OCI-LY7 (cell line): ENCODE measurements at regions of chr5 and their contacts with region 1.

Region 1: DNA sequence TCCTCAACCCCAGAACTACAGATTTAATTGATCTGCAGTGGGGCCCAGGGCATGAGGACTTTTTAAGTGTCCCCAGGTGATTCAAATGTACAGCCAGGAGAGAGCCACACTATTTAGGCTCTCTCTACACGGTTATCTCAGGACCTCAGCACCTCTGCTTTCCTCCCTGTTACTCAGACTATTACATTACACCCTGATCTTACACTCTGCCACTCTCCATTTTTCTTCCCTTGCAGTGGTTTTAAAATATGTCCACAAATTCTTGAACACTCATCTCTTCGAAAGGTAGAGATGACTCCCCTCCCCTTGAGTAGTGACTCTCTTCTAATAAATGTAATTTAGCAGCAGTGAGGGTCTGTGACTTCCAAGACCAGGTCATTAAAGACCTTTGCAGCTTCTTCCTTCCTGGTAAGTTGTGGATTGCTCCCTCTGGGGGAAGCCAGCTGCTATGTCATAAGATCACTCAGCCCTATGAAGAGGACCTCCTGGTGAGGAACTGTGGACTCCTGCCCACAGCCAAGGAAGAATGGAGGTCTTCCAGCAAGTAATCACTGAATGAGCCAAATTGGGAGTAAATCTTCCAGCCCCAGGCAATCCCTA is 87.5 kb upstream of the SSBP2 start:
- DNase-seq: peak; percentile 68
- H3K4me3 ChIP-seq: no peak overlapping the region
- H3K27ac ChIP-seq: no peak overlapping the region
- H3K4me1 ChIP-seq: peaks cover 5% of the 10 kb centered on the region
- CTCF ChIP-seq: peak; percentile 81

Region 2: GRCh38 chr5:81425569-81425968 is 412.8 kb before region 1 on chr5:
- CTCF ChIA-PET with region 1: no interaction called
- POLR2A ChIA-PET with region 1: no interaction called
- intact Hi-C with region 1: loop called (anchors 5 kb)
- DNase-seq: peak; percentile 75
- H3K4me3 ChIP-seq: no peak overlapping the region
- H3K27ac ChIP-seq: peak overlapping the region; percentile 24
- H3K4me1 ChIP-seq: peaks cover 13% of the 10 kb centered on the region
- CTCF ChIP-seq: peak; percentile 91

Region 3: DNA sequence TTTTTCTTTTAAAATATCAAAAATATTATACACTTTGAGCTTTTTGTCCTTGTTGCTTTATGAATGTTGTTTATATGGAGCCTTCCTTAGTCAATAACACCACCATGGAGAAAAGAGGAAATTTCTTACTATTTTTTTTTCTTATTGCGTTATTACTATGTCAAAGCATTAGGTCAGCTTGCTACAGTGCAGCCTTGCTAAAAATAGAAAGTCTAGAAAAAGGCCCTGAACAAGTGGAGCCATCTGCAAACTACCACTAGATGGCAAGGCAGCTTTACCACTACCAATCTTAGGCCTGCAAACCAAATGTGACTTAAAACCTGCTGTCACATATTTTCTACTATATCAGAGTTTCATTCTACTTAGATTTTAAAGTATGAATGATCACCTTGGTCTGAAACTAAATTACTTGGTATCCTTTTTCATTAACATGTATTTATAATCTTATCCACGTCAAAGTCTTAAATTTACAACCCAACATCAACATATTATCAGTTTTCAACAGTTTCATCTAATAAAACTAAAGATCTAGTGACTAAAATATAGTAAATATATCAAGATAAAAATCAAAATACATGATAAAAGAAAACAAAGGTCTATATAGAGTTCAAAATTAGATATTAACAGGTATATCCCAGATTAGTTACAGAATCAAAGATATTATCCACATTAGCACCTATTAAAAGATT is 331.4 kb before region 1 on chr5:
- CTCF ChIA-PET with region 1: no interaction called
- POLR2A ChIA-PET with region 1: interaction called, 3 read pairs
- intact Hi-C with region 1: loop called (anchors 5 kb)
- DNase-seq: peak; percentile 92
- H3K4me3 ChIP-seq: no peak overlapping the region
- H3K27ac ChIP-seq: peak overlapping the region; percentile 40
- H3K4me1 ChIP-seq: peaks cover 37% of the 10 kb centered on the region
- CTCF ChIP-seq: peak; percentile 96

Region 4: DNA sequence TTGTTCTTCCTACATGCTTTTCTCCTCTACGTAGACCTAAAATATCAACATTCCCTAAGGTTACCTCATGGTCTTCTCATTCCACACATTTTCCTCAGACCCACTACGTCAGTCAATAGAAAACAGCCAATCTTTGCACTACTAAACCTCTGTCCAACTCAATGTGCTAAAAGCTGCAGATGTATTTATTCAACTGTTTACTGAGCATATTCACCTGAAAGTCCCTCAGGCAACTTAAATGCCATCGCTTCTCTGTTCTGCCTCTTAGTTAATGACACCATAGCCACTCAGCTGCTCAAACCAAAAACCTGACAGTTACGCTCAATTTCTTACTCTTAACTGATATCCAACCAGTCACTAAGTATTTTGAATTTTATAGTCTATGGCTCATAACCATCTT is 162.6 kb before region 1 on chr5:
- CTCF ChIA-PET with region 1: no interaction called
- POLR2A ChIA-PET with region 1: no interaction called
- intact Hi-C with region 1: no loop called
- DNase-seq: no peak
- H3K4me3 ChIP-seq: no peak overlapping the region
- H3K27ac ChIP-seq: no peak overlapping the region
- H3K4me1 ChIP-seq: peaks cover under 1% of the 10 kb centered on the region
- CTCF ChIP-seq: no peak

Region 5: DNA sequence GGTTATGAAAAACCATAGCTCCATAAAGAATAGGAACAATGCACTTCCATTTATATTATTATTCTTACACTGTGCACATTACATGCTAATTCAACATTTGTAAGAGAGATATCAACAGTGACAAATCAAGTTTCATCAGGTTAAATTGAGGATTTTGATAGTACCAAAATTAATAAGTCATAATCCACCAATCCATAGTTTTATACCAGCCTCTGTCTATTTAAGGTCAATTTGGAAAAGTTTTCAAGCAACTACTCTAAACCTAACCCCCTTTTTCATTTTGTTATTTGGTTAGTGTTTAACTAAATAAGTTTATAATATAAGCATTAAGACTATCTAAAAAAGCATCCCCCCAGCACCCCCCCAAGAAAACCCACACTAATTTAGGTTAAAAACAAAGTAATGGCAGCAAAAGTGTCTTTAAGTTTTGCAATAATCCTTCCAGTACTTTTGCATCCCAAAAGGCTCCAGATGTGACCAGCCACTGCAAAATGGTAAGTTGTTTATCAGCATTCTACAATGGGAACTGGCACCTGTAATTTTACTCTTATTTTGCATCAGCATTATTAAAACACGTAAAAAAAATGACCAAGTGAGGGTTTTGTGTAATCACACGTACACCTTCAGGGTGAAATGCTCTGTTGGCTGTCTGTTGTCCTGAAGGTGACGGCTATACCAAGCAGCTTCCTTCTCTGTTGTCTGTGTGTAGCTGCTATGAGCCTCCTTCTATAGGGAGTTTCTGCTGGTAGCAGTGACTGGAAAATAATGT is 50.7 kb before region 1 on chr5:
- CTCF ChIA-PET with region 1: no interaction called
- POLR2A ChIA-PET with region 1: interaction called, 10 read pairs
- intact Hi-C with region 1: no loop called
- DNase-seq: peak; percentile 80
- H3K4me3 ChIP-seq: peak overlapping the region; percentile 20
- H3K27ac ChIP-seq: peak overlapping the region; percentile 26
- H3K4me1 ChIP-seq: peaks cover 22% of the 10 kb centered on the region
- CTCF ChIP-seq: no peak

Region 6: DNA sequence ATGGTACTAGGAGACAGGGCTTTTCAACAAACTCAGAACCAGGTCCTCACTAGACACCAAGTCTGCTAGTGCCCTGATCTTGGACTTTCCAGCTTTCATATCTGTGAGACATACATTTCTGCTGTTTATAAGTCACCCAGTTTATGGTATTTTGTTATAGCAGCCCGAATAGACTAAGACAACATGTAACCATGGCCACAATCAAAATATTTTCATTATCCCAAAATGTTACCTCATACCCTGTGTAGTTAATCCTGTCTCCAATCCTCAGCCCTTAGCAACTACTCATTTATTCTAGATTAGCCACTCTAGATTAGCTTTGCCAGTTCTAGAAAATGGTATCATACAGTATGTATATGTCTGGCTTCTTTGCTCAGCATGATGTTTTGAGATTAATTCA is 127.1 kb after region 1 on chr5:
- CTCF ChIA-PET with region 1: no interaction called
- POLR2A ChIA-PET with region 1: no interaction called
- intact Hi-C with region 1: no loop called
- DNase-seq: no peak
- H3K4me3 ChIP-seq: no peak overlapping the region
- H3K27ac ChIP-seq: no peak overlapping the region
- H3K4me1 ChIP-seq: peaks cover 3% of the 10 kb centered on the region
- CTCF ChIP-seq: no peak